ENCODE measurements at regions of chr11 and their contacts with region 1.

Region 1: GRCh38 chr11:119018074-119018938 is at the starts of genes RPS25 and TRAPPC4:
- DNase-seq: peak; percentile 93

Region 2: DNA sequence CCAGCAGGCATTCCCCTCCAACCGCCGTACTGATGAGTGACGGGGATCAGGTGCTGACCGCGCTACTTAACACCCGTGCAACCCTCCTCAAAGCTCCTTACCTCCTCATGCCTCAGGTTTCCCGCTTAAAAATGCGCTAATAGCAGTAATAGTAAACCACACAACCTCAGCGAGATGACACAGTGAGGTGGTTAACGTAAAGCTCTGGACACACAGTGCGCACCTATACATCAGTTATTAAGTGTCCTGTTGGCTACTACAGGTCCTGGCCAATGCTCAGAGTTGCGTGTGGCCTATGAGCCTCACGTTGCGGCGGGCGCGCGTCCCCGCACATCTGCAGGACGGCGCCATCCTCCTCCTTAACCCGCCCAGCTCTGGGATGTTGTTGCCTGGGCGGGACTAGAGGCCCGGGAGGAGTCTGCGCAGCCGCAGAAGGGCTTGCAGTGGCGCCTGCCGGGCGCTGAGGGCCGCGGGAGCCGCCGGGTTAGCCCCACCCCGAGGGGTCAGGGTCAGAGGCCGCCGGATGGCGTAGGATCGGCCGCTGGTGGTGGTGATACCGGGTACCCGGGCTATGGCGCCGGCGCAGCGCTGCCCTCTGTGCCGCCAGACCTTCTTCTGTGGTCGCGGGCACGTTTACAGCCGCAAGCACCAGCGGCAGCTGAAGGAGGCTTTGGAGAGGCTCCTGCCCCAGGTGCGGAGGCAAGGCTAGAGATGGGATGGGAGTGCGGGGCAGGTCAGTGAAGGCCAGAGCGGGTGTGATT is 20.5 kb before region 1 on chr11 and contains the start of gene CENATAC:
- CTCF ChIA-PET with region 1: no interaction called
- POLR2A ChIA-PET with region 1: interaction called, 15 read pairs
- DNase-seq: peak; percentile 99

Region 3: GRCh38 chr11:119030329-119031049 is 12.2 kb after region 1 on chr11 and contains the start of gene SLC37A4:
- CTCF ChIA-PET with region 1: interaction called, 4 read pairs
- POLR2A ChIA-PET with region 1: interaction called, 14 read pairs
- DNase-seq: peak; percentile 99